ENCODE measurements at regions of chr1 and their contacts with region 1.

Region 1: DNA sequence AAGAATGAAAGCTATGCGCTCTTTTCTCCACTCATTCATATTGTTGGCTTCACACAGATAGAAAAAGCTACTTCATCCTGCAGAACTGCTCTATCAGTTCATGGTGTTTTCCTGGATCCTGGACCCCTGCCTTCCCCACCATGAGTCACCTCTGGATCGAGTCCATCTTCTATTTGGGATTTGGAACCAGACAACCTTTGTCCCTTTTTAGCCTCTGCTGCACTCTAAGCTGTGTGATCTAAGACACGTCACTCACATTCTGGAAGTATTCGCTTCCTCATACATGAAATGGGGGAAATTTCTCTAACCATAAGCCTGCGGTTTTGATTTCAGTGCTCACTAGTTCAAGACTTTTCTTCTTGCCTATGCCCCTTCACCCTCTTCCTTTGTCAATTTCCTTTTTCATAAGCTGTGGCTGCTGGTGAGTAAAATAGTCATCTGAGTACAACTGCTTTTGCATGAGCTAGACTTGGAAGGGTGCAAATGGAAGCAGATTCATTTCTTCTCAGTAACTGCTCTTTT is 14.1 kb upstream of the DEGS1 start:
- DNase-seq: no peak

Region 2: DNA sequence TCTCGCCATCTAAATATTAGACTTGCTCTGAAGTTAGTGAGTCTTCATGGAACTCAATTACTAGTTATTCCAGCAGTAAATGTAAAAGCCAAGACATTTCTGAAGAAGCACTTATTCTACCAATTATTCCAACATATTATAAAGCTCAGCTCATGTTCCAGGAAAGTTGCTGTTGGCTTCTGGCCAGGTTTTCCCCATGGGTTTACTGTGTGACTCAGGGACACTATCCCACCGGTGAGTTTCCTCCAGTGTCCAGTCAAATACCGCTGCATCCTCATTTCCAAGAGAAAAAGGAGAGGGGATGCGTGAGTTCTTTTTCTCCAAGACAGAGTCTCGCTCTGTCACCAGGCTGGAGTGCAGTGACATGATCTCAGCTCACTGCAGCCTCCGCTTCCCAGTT is 1611.8 kb before region 1 on chr1:
- intact Hi-C with region 1: loop called in 1 of 2 experiments (anchors 10 kb)
- DNase-seq: no peak

Region 3: GRCh38 chr1:224149713-224150112 is 19.2 kb before region 1 on chr1:
- intact Hi-C with region 1: no loop called
- DNase-seq: no peak

Measured in posterior vena cava (tissue), 2 donors.